ENCODE measurements at regions of chr16 and their contacts with region 1.

Region 1: DNA sequence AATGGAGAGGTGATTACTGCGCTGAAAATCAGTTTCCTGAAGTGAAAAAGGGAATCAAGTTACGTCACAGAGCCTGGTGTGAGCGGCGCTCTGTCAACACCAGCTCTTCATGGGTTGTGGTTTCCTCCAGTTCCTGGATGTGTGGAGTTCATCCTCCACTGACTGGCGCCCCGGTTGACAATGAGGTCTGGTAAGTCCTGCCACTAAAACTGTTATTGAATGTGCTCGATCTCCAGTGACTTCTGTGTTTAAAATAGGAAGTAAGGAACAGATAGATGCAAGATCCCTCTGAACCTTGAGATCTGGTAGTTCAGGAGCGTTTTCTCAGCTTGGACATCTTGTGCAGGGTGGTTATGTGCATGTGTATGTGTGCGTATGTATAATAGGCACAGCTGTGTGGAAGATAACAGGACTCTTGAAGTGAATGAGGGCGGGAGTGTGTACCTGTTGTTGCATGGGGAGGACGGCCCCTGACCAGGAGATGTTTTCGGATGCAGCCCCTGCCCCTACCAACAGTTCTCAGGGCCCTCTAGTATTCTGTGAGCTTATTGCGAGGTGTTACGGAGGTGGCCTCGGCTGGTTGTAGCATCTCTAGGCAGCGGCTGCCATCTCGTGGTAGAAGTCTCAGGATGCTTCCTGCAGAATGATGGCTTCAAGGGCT is 22.0 kb upstream of the GOT2 start:
- DNase-seq: peak; percentile 80
- ATAC-seq: peak; percentile 96
- H3K4me3 Mint-ChIP-seq: peak overlapping the region; percentile 39
- H3K27ac Mint-ChIP-seq: peak overlapping the region; percentile 17
- H3K4me1 Mint-ChIP-seq: peaks cover 10% of the 10 kb centered on the region
- H3K27me3 Mint-ChIP-seq: no peaks in the 10 kb centered on the region
- CTCF ChIP-seq: 0 out of 2 replicates have a peak, but pooled peaks have one; percentile 37

Region 2: GRCh38 chr16:58299757-58300349 is 456.3 kb before region 1 on chr16:
- CTCF ChIA-PET with region 1: interaction called, 19 read pairs
- POLR2A ChIA-PET with region 1: no interaction called
- DNase-seq: peak; percentile 65
- ATAC-seq: peak; percentile 96
- H3K4me3 Mint-ChIP-seq: no peak overlapping the region
- H3K27ac Mint-ChIP-seq: no peak overlapping the region
- H3K4me1 Mint-ChIP-seq: 0 out of 2 replicates have a peak, but pooled peaks cover 3% of the 10 kb centered on the region
- H3K27me3 Mint-ChIP-seq: peaks cover 14% of the 10 kb centered on the region
- CTCF ChIP-seq: peak; percentile 76

Region 3: DNA sequence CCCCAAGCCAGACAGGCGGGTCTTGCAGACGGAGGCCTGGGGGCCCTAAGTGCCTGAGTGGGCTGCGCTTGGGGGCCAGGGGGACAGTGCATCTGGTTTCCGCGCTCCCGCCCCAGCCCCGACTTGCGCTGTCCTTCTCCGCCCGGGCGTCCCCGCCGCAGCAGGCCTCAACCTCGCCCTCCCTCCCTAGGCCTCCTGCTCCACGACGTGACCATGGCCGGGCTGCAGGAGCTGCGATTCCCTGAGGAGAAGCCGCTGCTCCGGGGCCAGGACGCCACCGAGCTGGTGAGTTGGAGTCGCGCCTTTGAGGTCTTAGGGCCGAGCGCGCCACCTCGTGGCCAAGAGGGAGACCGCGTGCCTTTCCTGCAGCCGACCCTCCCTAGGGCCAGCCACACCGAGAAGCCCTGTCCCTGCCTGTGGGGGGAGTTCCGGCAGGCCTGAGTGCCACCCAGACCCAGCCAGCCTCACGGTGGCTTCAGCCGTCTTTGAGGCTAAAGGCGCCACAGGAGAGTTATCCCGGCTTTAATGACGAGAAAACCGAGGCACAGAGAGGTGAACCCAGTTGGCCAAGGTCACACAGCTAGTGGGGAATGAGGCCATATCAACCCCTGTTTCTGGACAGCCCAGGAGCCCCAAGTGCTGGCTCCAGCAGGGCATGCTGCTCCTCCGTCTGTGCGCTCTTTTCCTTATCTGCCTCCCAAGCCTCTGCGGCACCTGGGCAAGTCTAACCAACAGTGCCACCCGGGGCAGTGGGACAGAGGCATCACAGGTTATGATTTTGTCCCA is 268.4 kb before region 1 on chr16:
- CTCF ChIA-PET with region 1: interaction called, 13 read pairs
- POLR2A ChIA-PET with region 1: no interaction called
- DNase-seq: peak; percentile 94
- ATAC-seq: peak; percentile 94
- H3K4me3 Mint-ChIP-seq: no peak overlapping the region
- H3K27ac Mint-ChIP-seq: no peak overlapping the region
- H3K4me1 Mint-ChIP-seq: peaks cover 5% of the 10 kb centered on the region
- H3K27me3 Mint-ChIP-seq: peaks cover 7% of the 10 kb centered on the region
- CTCF ChIP-seq: peak; percentile 95

Region 4: GRCh38 chr16:58507195-58507962 is 248.7 kb before region 1 on chr16:
- CTCF ChIA-PET with region 1: interaction called, 22 read pairs
- POLR2A ChIA-PET with region 1: no interaction called
- DNase-seq: no peak
- ATAC-seq: peak; percentile 36
- H3K4me3 Mint-ChIP-seq: no peak overlapping the region
- H3K27ac Mint-ChIP-seq: no peak overlapping the region
- H3K4me1 Mint-ChIP-seq: peaks cover 17% of the 10 kb centered on the region
- H3K27me3 Mint-ChIP-seq: peaks cover 23% of the 10 kb centered on the region
- CTCF ChIP-seq: no peak

Region 5: GRCh38 chr16:58661199-58661830 is 94.8 kb before region 1 on chr16:
- CTCF ChIA-PET with region 1: interaction called, 29 read pairs
- POLR2A ChIA-PET with region 1: no interaction called
- DNase-seq: peak; percentile 23
- ATAC-seq: peak; percentile 95
- H3K4me3 Mint-ChIP-seq: no peak overlapping the region
- H3K27ac Mint-ChIP-seq: no peak overlapping the region
- H3K4me1 Mint-ChIP-seq: no peaks in the 10 kb centered on the region
- H3K27me3 Mint-ChIP-seq: no peaks in the 10 kb centered on the region; the same call in 1 of the 2 replicates
- CTCF ChIP-seq: 0 out of 2 replicates have a peak, but pooled peaks have one; percentile 13

Region 6: DNA sequence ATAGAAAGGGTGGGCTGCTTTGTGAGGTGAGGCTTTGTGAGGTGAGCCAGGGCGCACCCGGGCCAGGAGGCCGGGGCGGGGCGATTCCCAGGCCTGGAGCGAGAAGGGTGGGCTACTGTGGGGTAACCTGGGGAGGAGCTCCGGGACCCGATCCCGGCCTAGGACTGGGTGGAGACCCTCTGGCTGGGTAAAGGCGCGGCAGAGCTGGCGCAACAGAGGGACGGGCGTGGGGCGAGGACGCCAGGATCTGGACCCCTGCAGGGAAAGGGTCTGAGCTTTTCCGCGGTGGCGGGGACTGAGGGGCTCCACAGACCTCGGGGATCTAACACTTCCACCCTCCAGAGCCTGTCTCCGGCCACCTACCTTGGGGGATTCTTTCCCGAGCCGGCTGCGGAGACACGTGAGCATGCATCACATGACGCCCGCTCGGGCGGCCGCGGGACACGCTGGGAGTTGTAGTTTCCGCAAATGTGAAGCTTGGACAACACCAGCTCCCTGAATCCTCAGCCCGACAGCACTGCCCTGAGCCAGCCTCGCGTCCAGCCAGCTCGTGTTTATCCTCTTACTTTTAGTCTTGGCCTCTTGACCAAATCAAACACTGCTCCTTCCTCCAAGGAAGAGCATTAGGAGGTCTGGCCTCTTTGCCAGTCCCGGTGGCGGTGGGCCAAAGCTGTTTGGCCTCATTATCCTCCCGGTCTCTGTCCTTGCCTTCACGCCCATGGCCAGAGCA is 71.6 kb before region 1 on chr16 and contains the start of gene SLC38A7:
- CTCF ChIA-PET with region 1: interaction called, 36 read pairs
- POLR2A ChIA-PET with region 1: no interaction called
- DNase-seq: peak; percentile 89
- ATAC-seq: peak; percentile 95
- H3K4me3 Mint-ChIP-seq: peak within 1 kb of the TSS; percentile 88
- H3K27ac Mint-ChIP-seq: peak within 1 kb of the TSS; percentile 27; the same call in 1 of the 2 replicates
- H3K4me1 Mint-ChIP-seq: peaks cover 10% of the 10 kb centered on the region
- H3K27me3 Mint-ChIP-seq: no peaks in the 10 kb centered on the region; the same call in 1 of the 2 replicates
- CTCF ChIP-seq: no peak
- total RNA-seq, gene SLC38A7: 20.6 to 23.1 TPM (median 22.9 TPM) in 3 replicates

Region 7: GRCh38 chr16:59090541-59090940 is 334.4 kb after region 1 on chr16:
- CTCF ChIA-PET with region 1: no interaction called
- POLR2A ChIA-PET with region 1: no interaction called
- DNase-seq: no peak
- ATAC-seq: peak; percentile 64
- H3K4me3 Mint-ChIP-seq: no peak overlapping the region
- H3K27ac Mint-ChIP-seq: no peak overlapping the region
- H3K4me1 Mint-ChIP-seq: peaks cover 10% of the 10 kb centered on the region
- H3K27me3 Mint-ChIP-seq: no peaks in the 10 kb centered on the region
- CTCF ChIP-seq: no peak